Activated B cell treated with CpG ODN at 0.5 μM for 24 hours (primary cell): ENCODE measurements at regions of chrX and their contacts with region 1.

Region 1: GRCh38 chrX:119693040-119693995 is at the start of gene SEPTIN6:
- DNase-seq: peak; percentile 70
- ATAC-seq: peak; percentile 71
- H3K4me3 Mint-ChIP-seq: peak within 1 kb of the TSS; percentile 97
- H3K27ac Mint-ChIP-seq: peak within 1 kb of the TSS; percentile 94
- H3K4me1 Mint-ChIP-seq: peaks cover 71% of the 10 kb centered on the region
- H3K27me3 Mint-ChIP-seq: no peaks in the 10 kb centered on the region
- CTCF ChIP-seq: no peak
- total RNA-seq, gene SEPTIN6: 330 and 338 TPM in 2 replicates

Region 2: DNA sequence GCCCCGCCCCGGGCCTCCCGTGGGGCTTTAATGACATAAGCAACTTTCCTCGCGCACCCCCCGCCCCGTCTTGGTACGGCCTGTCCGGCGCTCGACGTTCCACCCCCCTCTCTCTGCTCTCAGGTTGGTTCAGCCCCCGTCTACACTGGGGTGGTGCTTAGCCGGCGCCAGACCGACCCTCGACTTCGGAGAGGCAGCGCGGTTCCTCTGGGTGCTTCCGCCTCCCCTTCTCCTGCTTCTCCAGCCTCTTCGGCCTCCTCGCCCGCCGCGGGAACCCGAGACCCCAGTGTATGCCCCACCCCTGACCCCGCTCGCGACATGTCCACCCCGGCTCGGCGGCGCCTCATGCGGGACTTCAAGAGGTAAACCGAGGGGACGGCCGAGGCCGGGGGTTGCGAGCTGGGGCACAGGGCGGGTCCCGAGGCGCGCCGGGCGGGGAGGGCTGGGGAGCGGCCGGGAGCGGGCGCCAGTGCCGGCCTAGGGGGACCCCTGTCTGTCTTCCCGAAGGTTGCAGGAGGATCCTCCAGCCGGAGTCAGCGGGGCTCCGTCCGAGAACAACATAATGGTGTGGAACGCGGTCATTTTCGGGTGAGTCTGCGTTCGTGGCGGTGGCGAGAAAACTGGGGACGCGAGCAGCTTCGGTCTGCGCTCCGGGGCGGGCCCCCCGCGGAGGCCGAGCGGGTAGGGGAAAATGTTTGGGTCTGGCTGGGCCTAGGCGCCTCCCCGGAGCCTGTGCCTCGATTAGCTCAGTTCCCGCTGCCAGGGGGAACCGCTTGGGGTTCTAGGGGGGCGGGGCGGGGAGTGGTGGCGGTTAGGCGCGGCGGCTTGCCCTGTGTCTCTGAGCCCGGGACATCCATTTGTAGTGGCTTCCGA is 118.7 kb before region 1 on chrX and contains the start of gene UBE2A:
- CTCF ChIA-PET with region 1: no interaction called
- POLR2A ChIA-PET with region 1: interaction called, 15 read pairs
- intact Hi-C with region 1: loop called (anchors 2 kb)
- DNase-seq: peak; percentile 78
- ATAC-seq: peak; percentile 94
- H3K4me3 Mint-ChIP-seq: peak within 1 kb of the TSS; percentile 93
- H3K27ac Mint-ChIP-seq: peak within 1 kb of the TSS; percentile 91
- H3K4me1 Mint-ChIP-seq: peaks cover 38% of the 10 kb centered on the region
- H3K27me3 Mint-ChIP-seq: no peaks in the 10 kb centered on the region
- CTCF ChIP-seq: no peak
- total RNA-seq, gene UBE2A: 65.9 and 73.5 TPM in 2 replicates

Region 3: DNA sequence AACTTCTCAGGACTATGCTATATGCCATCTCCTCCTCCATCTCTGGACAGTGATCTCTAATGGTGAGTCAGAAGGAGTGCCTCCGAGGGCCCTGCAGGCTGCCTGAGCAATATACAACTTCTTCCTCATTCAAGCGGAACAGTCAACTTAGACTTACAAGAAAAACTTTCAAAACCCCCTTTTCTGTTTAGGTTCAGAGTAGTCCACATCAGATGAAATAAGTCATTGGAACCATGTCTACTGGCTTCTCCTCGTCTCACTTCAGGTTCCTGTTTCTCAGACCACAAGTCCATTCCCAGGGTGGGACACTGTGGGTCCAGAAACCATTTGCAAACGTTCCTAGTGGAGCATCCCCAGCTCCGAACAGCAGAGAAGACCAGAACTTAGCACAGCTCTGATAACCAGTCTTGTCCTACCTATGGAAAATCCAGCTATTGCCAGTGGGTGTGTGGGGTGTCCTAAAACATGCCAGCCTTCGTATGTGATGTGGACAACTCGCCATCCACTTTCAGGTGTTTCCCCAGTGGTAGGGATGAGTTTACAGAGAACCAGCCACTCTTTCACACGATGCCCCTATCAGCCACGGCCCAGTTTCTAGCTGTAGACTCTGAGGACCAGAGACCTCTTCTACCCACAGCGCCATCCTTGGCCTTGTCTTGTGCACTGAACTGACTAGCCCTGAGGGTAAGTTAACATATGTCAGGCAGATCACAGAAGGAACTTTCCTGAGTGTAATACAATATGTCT is 54.4 kb before region 1 on chrX:
- CTCF ChIA-PET with region 1: no interaction called
- POLR2A ChIA-PET with region 1: interaction called, 42 read pairs
- intact Hi-C with region 1: no loop called
- DNase-seq: no peak
- ATAC-seq: peak; percentile 73
- H3K4me3 Mint-ChIP-seq: peak overlapping the region; percentile 56
- H3K27ac Mint-ChIP-seq: peak overlapping the region; percentile 93
- H3K4me1 Mint-ChIP-seq: peaks cover 62% of the 10 kb centered on the region
- H3K27me3 Mint-ChIP-seq: no peaks in the 10 kb centered on the region
- CTCF ChIP-seq: no peak

Region 4: DNA sequence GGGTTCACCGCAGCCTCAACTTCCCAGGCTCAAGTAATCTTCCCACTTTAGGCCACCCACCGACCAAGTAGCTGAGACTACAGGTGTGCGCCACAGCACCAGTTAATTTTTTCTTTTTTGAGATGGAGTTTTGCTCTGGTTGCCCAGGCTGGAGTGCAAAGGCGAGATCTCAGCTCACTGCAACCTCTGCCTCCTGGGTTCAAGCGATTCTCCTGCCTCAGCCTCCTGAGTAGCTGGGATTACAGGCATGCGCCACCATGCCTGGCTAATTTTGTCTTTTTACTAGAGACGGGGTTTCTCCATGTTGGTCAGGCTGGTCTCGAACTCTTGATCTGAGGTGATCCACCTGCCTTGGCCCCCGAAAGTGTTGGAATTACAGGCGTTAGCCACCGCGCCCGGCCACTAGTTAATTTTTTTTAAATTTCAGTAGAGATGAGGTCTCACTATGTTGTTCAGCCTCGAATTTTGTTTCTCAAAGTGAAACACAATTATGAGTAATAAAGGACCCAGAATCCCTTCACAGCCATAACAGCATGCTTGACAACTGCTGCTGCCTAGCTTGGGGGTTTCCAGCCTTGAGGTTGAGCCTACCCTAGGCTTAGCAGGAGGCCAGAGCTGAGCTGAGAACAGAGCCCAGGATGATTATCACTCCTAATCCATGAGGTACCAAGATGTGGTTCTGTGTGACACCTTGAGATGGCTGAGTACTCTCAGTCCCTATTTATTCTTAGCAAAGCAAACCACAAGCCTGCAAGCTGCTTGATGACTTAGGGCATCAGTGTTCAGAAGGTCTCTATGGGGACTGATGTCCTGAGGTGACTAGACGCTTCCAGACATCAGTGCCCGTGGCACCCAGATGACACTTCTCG is 45.5 kb before region 1 on chrX:
- CTCF ChIA-PET with region 1: interaction called, 4 read pairs
- POLR2A ChIA-PET with region 1: interaction called, 13 read pairs
- intact Hi-C with region 1: loop called (anchors 2 kb)
- DNase-seq: no peak
- ATAC-seq: peak; percentile 89
- H3K4me3 Mint-ChIP-seq: peak overlapping the region; percentile 45
- H3K27ac Mint-ChIP-seq: peak overlapping the region; percentile 93
- H3K4me1 Mint-ChIP-seq: peaks cover 28% of the 10 kb centered on the region
- H3K27me3 Mint-ChIP-seq: no peaks in the 10 kb centered on the region
- CTCF ChIP-seq: no peak

Region 5: DNA sequence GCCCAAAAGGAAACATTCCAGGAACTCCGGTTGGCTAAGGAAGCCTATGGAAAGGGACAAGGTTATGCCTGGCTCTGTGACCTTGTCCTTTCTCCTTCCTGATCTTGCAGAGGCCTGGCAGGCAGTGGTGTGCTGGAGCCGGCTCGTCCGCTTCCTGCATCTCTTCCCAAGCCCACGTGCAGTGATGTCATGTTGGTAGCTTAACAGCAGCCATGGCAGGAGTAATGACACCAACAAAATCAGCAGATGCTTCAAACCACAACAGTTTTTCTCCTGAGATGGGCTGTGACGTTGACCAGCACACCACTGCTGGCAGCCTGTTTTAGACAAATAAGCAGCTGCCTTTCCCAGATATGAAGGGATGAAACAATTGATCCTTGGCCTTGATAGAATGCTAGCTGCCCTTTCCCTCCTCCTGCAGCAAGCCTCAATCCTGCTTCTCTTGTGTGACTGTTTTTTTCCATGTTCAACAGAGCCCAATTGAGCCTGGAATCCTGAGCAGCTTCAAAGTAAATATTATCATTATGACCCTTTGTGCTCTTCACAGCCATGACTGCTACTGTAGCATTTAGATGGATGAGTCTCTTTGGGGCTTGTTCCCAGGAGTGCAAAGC is 23.8 kb before region 1 on chrX:
- CTCF ChIA-PET with region 1: interaction called, 4 read pairs
- POLR2A ChIA-PET with region 1: interaction called, 13 read pairs
- intact Hi-C with region 1: loop called (anchors 1 kb)
- DNase-seq: no peak
- ATAC-seq: no peak
- H3K4me3 Mint-ChIP-seq: no peak overlapping the region
- H3K27ac Mint-ChIP-seq: no peak overlapping the region
- H3K4me1 Mint-ChIP-seq: peaks cover 36% of the 10 kb centered on the region
- H3K27me3 Mint-ChIP-seq: no peaks in the 10 kb centered on the region
- CTCF ChIP-seq: no peak

Region 6: DNA sequence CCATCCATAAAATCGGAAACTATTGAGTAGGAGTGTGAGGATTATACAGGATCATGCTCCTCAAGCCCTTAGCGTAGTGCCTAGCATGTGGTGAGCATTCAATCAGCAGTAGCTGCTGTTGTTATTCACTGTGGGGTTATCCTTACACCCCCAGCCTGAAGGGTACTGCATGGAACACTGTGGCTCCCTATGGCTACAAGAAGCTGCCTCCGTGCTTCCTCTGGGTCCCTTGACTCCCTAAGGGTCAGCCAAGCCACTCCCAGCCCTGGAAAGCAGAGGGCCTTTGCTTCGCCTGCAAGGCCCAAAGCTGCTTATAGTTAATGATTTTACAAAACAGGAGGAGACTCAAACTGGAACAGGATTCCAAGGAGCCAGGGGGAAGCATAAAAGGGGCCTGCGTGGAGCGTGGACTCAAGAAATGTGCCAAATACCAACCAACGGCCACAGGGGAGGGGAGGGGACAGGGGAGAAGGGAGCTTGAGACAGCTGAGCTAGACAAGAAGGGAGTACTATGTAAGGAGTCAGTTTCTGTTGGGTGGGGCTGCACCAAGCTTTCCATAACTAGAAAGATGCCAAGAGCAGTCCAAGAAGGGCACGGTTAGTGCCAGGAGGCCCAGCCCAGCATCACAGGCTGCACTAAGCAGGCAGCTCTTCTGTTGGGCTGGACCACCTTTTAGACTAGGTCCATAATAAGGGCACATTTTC is 16.2 kb before region 1 on chrX:
- CTCF ChIA-PET with region 1: interaction called, 4 read pairs
- POLR2A ChIA-PET with region 1: interaction called, 57 read pairs
- intact Hi-C with region 1: loop called (anchors 1 kb)
- DNase-seq: no peak
- ATAC-seq: no peak
- H3K4me3 Mint-ChIP-seq: peak overlapping the region; percentile 71
- H3K27ac Mint-ChIP-seq: peak overlapping the region; percentile 90
- H3K4me1 Mint-ChIP-seq: peaks cover 58% of the 10 kb centered on the region
- H3K27me3 Mint-ChIP-seq: no peaks in the 10 kb centered on the region
- CTCF ChIP-seq: no peak

Region 7: GRCh38 chrX:119753571-119754257 is 60.4 kb after region 1 on chrX:
- CTCF ChIA-PET with region 1: interaction called, 3 read pairs
- POLR2A ChIA-PET with region 1: interaction called, 14 read pairs
- intact Hi-C with region 1: loop called (anchors 2 kb)
- DNase-seq: no peak
- ATAC-seq: peak; percentile 5
- H3K4me3 Mint-ChIP-seq: peak overlapping the region; percentile 50
- H3K27ac Mint-ChIP-seq: peak overlapping the region; percentile 98
- H3K4me1 Mint-ChIP-seq: peaks cover 44% of the 10 kb centered on the region
- H3K27me3 Mint-ChIP-seq: no peaks in the 10 kb centered on the region
- CTCF ChIP-seq: no peak

Region 8: DNA sequence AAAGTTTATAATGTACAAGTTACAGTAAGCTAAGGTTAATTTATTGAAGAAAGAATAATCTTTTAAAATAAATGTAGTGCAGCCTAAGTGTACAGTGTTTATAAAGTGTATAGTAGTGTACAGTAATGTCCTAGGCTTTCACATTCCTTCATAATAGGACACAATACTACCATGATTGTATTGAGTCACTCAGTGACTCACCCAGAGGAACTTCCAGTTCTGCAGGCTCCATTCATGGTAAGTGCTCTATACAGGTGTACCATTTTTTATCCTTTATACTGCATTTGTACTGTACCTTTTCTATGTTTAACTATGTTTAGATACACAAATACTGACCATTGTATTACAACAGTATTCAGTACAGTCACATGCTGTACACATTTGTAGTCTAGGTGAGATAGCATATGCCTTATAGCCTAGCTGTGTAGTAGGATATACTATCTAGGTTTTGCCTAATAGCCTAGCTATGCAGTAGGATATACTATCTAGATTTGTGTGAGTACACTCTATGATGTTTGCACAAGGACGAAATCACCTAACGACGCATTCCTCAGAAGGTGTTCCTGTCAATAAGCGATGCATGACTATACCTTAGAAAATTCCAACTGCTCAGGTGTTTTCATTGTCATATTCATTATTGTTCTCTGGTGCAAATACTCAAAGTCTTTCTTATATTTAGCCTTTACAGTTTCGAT is 623.4 kb after region 1 on chrX:
- CTCF ChIA-PET with region 1: no interaction called
- POLR2A ChIA-PET with region 1: no interaction called
- intact Hi-C with region 1: no loop called
- DNase-seq: no peak
- ATAC-seq: no peak
- H3K4me3 Mint-ChIP-seq: no peak overlapping the region
- H3K27ac Mint-ChIP-seq: no peak overlapping the region
- H3K4me1 Mint-ChIP-seq: peaks cover 3% of the 10 kb centered on the region
- H3K27me3 Mint-ChIP-seq: peaks cover 2% of the 10 kb centered on the region
- CTCF ChIP-seq: no peak